ENCODE measurements at regions of chr2 and their contacts with region 1.

Region 1: DNA sequence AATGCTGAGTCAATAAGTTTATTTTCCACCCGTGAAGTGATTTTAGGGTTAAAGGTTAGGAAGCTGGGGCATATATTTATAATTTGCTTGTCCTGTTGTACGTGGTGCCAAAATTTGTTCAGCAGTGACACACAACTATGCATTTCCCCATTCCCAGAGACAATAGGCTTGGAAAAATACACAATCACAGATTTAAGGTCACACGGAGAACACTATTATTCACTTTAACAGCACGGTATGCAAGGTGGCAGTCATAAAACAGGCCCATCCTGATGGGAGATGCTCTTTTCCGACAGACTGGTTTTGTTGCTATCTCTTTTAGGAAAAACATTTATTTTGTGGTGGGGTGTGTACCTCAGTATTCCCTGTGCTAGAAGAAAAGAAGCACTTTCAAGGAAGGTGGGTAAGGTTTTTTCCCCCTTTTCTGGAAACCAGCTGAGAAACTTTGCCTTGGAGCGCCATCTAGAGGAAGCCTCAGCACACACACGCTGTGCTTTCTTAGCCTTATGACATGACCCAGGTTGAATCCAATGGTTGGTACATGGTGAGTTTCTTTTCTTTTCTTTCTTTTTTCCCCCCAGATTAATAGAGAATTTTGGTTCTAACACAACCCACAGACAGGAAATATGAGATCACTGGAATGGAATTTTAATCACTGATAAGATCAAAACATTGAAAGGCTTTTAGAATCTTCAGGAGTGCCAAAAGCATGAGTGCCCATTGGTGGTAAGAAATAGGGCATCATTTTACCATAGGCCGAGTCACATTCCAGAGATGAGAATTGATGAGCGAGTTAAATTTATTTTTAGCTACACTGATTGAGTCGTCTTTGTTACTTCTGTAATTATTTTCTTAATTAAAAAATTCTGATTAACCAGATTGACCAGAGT is 332.1 kb downstream of the AGPS start:
- DNase-seq: peak; percentile 62
- ATAC-seq: peak; percentile 81
- H3K4me3 ChIP-seq: no peak overlapping the region
- H3K27ac ChIP-seq: no peak overlapping the region
- H3K4me1 ChIP-seq: no peaks in the 10 kb centered on the region
- H3K27me3 ChIP-seq: peaks cover 52% of the 10 kb centered on the region
- CTCF ChIP-seq: peak; percentile 95

Region 2: GRCh38 chr2:177419274-177419673 is 305.4 kb before region 1 on chr2:
- CTCF ChIA-PET with region 1: no interaction called
- POLR2A ChIA-PET with region 1: no interaction called
- intact Hi-C with region 1: loop called (anchors 10 kb)
- DNase-seq: peak; percentile 28
- ATAC-seq: no peak
- H3K4me3 ChIP-seq: no peak overlapping the region
- H3K27ac ChIP-seq: no peak overlapping the region
- H3K4me1 ChIP-seq: peaks cover 9% of the 10 kb centered on the region; the same call in 1 of the 2 replicates
- H3K27me3 ChIP-seq: no peaks in the 10 kb centered on the region
- CTCF ChIP-seq: no peak

Region 3: DNA sequence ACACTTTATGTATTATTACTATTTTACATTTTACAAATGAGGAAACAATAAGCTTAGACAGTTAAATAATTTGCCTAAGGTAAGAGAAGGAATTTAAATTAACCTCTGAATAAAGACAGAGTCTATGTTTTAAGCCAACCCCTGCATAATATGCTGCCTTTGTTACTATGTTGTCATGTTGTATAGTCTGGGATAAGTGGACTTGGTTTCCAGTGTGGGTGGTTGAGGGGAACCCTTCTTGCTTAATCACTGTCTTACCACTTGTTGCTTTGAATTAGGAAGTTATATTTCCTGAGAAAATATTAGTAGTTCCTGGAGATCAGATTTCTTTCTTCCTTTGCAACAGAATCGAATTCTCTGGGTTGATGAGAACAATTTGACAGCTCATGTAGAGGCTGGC is 279.4 kb before region 1 on chr2:
- CTCF ChIA-PET with region 1: no interaction called
- POLR2A ChIA-PET with region 1: no interaction called
- intact Hi-C with region 1: no loop called
- DNase-seq: no peak
- ATAC-seq: no peak
- H3K4me3 ChIP-seq: no peak overlapping the region
- H3K27ac ChIP-seq: no peak overlapping the region
- H3K4me1 ChIP-seq: no peaks in the 10 kb centered on the region
- H3K27me3 ChIP-seq: no peaks in the 10 kb centered on the region
- CTCF ChIP-seq: no peak

Region 4: GRCh38 chr2:177489719-177490301 is 234.8 kb before region 1 on chr2:
- CTCF ChIA-PET with region 1: interaction called, 3 read pairs
- POLR2A ChIA-PET with region 1: no interaction called
- intact Hi-C with region 1: loop called (anchors 1 kb)
- DNase-seq: peak; percentile 56
- ATAC-seq: peak; percentile 49
- H3K4me3 ChIP-seq: no peak overlapping the region
- H3K27ac ChIP-seq: no peak overlapping the region
- H3K4me1 ChIP-seq: no peaks in the 10 kb centered on the region
- H3K27me3 ChIP-seq: no peaks in the 10 kb centered on the region
- CTCF ChIP-seq: peak; percentile 85

Region 5: GRCh38 chr2:177629357-177630024 is 95.2 kb before region 1 on chr2:
- CTCF ChIA-PET with region 1: no interaction called
- POLR2A ChIA-PET with region 1: no interaction called
- intact Hi-C with region 1: loop called (anchors 10 kb)
- DNase-seq: no peak
- ATAC-seq: no peak
- H3K4me3 ChIP-seq: no peak overlapping the region
- H3K27ac ChIP-seq: no peak overlapping the region
- H3K4me1 ChIP-seq: no peaks in the 10 kb centered on the region
- H3K27me3 ChIP-seq: peaks cover 23% of the 10 kb centered on the region
- CTCF ChIP-seq: no peak

Measured in PC-3 (cell line).